Right ventricle myocardium inferior (tissue), 1 donor: ENCODE measurements at regions of chr18 and their contacts with region 1.

Region 1: GRCh38 chr18:31741097-31741735 is 19.5 kb downstream of the SLC25A52 start:
- DNase-seq: no peak
- ATAC-seq: no peak

Region 2: GRCh38 chr18:30971338-30971956 is 769.8 kb before region 1 on chr18:
- intact Hi-C with region 1: loop called (anchors 10 kb)
- DNase-seq: no peak
- ATAC-seq: no peak

Region 3: DNA sequence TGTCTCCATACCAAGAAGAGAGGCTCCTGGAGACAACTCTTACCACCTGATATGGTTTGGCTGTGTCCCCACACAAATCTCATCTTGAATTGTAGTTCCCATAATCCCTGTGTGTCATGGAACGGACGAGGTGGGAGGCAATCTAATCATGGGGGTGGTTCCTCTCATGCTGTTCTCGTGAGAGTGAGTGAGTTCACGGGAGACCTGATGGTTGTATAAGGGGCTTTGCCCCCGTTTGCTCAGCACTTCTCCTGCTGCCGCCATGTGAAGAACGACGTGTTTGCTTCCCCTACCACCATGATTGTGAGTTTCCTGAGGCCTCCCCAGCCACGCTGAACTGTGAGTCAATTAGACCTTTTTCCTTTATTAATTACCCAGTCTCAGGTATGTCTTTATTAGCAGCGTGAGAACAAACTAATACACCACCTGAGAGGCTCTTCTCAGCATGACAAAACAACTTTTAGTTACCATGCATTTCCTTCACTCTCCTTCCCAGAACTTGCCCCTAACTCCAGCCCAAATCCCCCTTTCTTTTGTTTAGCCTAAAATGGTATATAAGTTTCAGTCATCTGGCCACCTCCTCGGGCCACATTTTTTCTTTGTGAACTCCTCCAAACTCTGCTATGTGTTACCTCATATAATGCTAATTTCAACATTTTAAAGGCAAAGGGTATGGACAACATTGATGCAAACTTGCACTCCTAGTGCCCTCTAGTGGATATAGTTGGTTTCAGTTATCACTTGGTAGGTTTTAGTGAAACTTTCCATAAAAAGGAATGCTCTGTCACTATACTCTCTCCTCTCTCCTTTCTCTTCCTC is 78.1 kb after region 1 on chr18:
- intact Hi-C with region 1: loop called (anchors 2 kb)
- DNase-seq: no peak
- ATAC-seq: no peak